ENCODE measurements at regions of chr5 and their contacts with region 1.

Region 1: GRCh38 chr5:16791036-16791705 is 144.9 kb downstream of the MYO10 start:
- DNase-seq: no peak
- H3K4me3 Mint-ChIP-seq: no peak overlapping the region
- H3K27ac Mint-ChIP-seq: no peak overlapping the region
- H3K4me1 Mint-ChIP-seq: peaks cover 3% of the 10 kb centered on the region
- H3K27me3 Mint-ChIP-seq: peaks cover 5% of the 10 kb centered on the region

Region 2: DNA sequence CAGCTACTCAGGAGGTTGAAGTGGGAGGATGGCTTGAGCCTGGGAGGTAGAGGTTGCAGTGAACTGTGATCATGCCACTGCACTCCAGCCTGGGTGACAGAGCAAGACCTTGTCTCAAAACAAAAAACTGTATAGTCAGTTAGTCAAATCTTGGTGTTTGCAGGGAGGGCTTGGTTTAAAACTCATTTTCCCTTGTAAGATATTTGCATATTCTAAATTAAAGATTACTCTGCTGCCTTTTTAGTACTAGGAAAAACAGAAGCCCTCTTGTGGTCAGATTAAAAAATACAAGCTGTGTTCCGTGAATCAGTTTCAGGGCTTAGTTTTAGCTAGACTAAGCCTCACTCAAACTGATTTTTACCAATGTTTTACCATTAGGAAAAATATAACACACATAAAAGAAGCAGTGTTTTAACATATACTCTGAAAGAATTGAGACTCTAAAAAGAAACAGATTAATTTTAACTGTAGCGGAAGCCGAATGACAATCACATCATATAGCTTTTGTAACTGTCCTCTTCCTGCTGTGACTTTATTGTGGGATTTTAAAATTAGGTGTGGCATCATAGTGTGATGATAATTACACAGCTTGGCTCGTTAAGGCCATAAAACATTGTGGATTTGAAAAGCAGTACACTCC is 341.4 kb after region 1 on chr5:
- intact Hi-C with region 1: loop called (anchors 1 kb)
- DNase-seq: no peak
- H3K4me3 Mint-ChIP-seq: no peak overlapping the region
- H3K27ac Mint-ChIP-seq: no peak overlapping the region
- H3K4me1 Mint-ChIP-seq: peaks cover 3% of the 10 kb centered on the region
- H3K27me3 Mint-ChIP-seq: peaks cover 6% of the 10 kb centered on the region

Region 3: GRCh38 chr5:17189381-17190036 is 398.3 kb after region 1 on chr5:
- intact Hi-C with region 1: loop called (anchors 1 kb)
- DNase-seq: peak; percentile 22
- H3K4me3 Mint-ChIP-seq: no peak overlapping the region
- H3K27ac Mint-ChIP-seq: no peak overlapping the region
- H3K4me1 Mint-ChIP-seq: no peaks in the 10 kb centered on the region
- H3K27me3 Mint-ChIP-seq: no peaks in the 10 kb centered on the region

Measured in activated T-helper 2 cell treated with anti-CD3 and anti-CD28 coated beads, Interferon-gamma antibody, Interleukin-2, Interleukin-4, amounts not matched to agents 10 μg/mL and 5 μg/mL and 100 μg/mL, durations not matched to agents 14 hours and 24 hours and 36 hours (primary cell).